PC-3 (cell line): ENCODE measurements at regions of chrX and their contacts with region 1.

Region 1: GRCh38 chrX:71128915-71129765 is 10.7 kb downstream of the MED12 start:
- DNase-seq: peak; percentile 58
- ATAC-seq: peak; percentile 88
- H3K4me3 ChIP-seq: no peak overlapping the region
- H3K27ac ChIP-seq: no peak overlapping the region
- H3K4me1 ChIP-seq: no peaks in the 10 kb centered on the region
- H3K27me3 ChIP-seq: no peaks in the 10 kb centered on the region
- CTCF ChIP-seq: peak; percentile 86

Region 2: DNA sequence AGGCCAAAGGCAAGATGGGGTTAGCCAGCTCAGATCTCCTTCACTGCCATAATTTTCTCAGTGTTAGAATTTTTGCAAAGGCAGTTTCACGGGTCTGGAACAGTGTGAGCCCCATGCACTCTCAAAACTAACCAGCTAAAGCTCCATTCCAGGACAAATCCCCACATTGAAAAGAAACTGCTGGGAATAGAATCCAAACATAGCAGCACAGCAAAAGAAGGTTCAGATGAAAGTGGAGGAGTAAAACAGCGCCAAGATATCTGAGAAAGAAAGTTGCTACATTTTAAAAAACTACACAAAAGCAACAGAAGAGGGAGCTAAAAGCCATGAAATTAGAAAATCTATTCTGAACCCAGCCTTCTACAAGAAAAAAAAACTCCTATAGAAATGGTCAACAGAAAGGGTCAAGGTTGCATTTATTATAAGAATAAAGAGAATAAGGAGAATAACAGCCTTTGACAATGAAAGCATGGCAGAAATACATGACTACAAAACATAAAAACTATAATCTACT is 158.6 kb before region 1 on chrX:
- CTCF ChIA-PET with region 1: no interaction called
- POLR2A ChIA-PET with region 1: no interaction called
- intact Hi-C with region 1: loop called (anchors 1 kb)
- DNase-seq: peak; percentile 49
- ATAC-seq: no peak
- H3K4me3 ChIP-seq: no peak overlapping the region
- H3K27ac ChIP-seq: no peak overlapping the region
- H3K4me1 ChIP-seq: no peaks in the 10 kb centered on the region
- H3K27me3 ChIP-seq: peaks cover 4% of the 10 kb centered on the region; the same call in 1 of the 2 replicates
- CTCF ChIP-seq: peak; percentile 61; the same call in 1 of the 2 replicates